IMR-90 (cell line): ENCODE measurements at regions of chr9 and their contacts with region 1.

Region 1: GRCh38 chr9:124110307-124110915 is 98.8 kb downstream of the LHX2 start:
- DNase-seq: peak; percentile 59
- ATAC-seq: peak; percentile 95
- H3K4me3 ChIP-seq: no peak overlapping the region
- H3K27ac ChIP-seq: no peak overlapping the region
- H3K4me1 ChIP-seq: no peaks in the 10 kb centered on the region
- H3K27me3 ChIP-seq: peaks cover 32% of the 10 kb centered on the region
- CTCF ChIP-seq: no peak
- POLR2A ChIP-seq: no peak
- RAD21 ChIP-seq: no peak

Region 2: DNA sequence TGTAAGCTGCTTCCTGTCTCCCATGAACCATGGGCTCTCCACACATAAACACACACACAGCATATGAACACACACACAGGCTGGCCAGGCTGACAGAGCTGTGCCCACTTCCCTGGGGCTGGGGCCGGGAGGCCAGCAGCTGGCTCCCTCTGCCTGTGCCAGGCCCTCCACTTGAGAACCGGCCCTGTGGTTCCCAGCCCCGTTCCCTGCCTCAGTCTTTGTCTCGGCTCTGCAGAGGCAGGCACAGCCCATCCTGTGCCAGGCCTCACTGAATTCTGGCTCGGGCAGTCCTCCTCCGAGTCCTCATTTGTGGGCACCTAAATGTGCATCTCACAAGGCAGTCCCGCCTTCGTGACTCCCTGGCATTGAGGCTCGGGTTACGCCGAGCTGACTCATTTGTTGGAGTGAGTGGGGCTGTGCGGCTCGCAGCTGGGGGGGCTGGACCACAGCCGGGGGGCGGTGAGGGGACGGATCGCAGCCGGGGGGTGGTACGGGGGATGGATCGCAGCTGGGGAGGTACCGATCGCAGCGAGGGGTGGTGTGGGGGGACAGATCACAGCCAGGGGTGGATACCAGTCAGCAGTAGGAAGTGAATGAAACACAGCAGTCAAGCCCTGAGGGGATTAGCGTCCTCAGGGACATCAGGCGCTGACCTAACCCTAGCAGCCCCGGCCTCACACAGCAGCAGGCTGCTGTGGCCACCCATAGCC is 232.5 kb after region 1 on chr9:
- CTCF ChIA-PET with region 1: no interaction called
- POLR2A ChIA-PET with region 1: interaction called, 25 read pairs
- dilution Hi-C with region 1: no loop called
- in situ Hi-C with region 1: no loop called
- intact Hi-C with region 1: no loop called
- DNase-seq: peak; percentile 94
- ATAC-seq: peak; percentile 87
- H3K4me3 ChIP-seq: no peak overlapping the region
- H3K27ac ChIP-seq: peak overlapping the region; percentile 91
- H3K4me1 ChIP-seq: peaks cover 20% of the 10 kb centered on the region
- H3K27me3 ChIP-seq: no peaks in the 10 kb centered on the region
- CTCF ChIP-seq: no peak
- POLR2A ChIP-seq: peak; percentile 37; the same call in 1 of the 2 replicates
- RAD21 ChIP-seq: peak; percentile 18; the same call in 1 of the 2 replicates

Region 3: GRCh38 chr9:124675261-124676158 is 565.1 kb after region 1 on chr9:
- CTCF ChIA-PET with region 1: no interaction called
- POLR2A ChIA-PET with region 1: no interaction called
- dilution Hi-C with region 1: no loop called
- in situ Hi-C with region 1: no loop called
- intact Hi-C with region 1: no loop called
- DNase-seq: no peak
- ATAC-seq: no peak
- H3K4me3 ChIP-seq: no peak overlapping the region
- H3K27ac ChIP-seq: no peak overlapping the region
- H3K4me1 ChIP-seq: peaks cover 3% of the 10 kb centered on the region; the same call in 1 of the 2 replicates
- H3K27me3 ChIP-seq: no peaks in the 10 kb centered on the region
- CTCF ChIP-seq: no peak
- POLR2A ChIP-seq: no peak
- RAD21 ChIP-seq: no peak